Heart left ventricle (tissue), 16 donors: ENCODE measurements at regions of chr13 and their contacts with region 1.

Region 1: DNA sequence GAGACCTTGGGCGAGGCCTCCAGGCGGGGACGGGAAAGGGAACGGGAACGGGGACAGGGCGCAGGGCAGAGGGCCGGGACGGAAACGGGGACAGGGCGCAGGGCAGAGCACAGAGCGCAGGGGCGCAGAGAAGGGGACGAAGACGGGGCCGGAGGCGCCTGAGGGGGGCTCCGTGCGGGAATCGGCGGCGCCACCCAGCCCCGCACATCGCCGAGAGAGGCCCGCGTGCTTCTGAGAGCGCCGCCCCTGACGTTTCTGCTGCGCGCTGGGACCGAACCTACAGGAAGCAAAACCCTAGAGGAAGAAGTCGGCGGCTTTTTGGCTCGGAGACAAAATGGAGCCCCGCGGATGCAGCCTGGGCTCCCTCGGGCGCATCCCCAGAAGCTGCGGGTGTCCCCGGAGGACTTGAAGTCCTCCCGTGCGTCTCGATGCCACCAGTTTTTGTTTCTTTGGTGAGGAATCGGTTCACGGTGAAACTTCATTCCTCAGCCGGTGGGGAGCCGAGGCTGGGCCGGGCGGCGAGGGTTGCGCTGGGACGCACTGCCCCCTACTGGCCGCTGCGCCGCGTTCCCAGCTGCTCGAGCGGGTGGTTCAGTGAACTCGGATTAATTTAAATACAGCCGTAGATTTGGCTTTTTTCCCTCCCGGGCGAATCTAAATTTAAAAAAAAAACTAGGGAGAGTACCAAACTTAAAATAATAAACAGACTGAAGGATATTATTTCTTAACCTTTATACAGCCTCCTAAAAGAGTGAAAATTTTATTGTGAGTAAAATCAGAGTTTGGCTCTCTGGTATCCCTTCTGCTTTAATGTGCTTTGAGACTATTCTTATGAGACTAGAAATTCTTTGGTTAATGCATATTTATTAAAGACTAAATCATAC is 350.0 kb upstream of the ARGLU1 start:
- DNase-seq: peak; percentile 67 to 88 (median 82)
- ATAC-seq: peak; percentile 85 to 92 (median 88)
- H3K4me3 ChIP-seq: peak overlapping the region; percentile 40 to 73 (median 62)
- H3K27ac ChIP-seq: peak overlapping the region; percentile 86 to 98 (median 94)
- H3K4me1 ChIP-seq: peaks cover 0 to 27% (median 8%) of the 10 kb centered on the region in 12 donors
- H3K27me3 ChIP-seq: peaks cover 0 to 3% (median 0%) of the 10 kb centered on the region in 9 donors
- CTCF ChIP-seq: peak; percentile 88 to 98 (median 93)
- POLR2A ChIP-seq: no peak

Region 2: GRCh38 chr13:106567474-106568298 is 350.2 kb before region 1 on chr13 and contains the start of gene ARGLU1:
- intact Hi-C with region 1: loop called in 1 of 10 experiments (anchors 10 kb)
- DNase-seq: peak; percentile 94 to 97 (median 95)
- ATAC-seq: peak; percentile 93 to 97 (median 94)
- H3K4me3 ChIP-seq: peak within 1 kb of the TSS; percentile 72 to 98 (median 95)
- H3K27ac ChIP-seq: peak within 1 kb of the TSS; percentile 96 to 100 (median 98)
- H3K4me1 ChIP-seq: peaks cover 0 to 55% (median 40%) of the 10 kb centered on the region in 12 donors
- H3K27me3 ChIP-seq: no peaks in the 10 kb centered on the region
- CTCF ChIP-seq: no peak
- POLR2A ChIP-seq: peak; percentile 47 to 94
- total RNA-seq, gene ARGLU1: 14.2 to 35.6 (median 28.1) TPM

Region 3: DNA sequence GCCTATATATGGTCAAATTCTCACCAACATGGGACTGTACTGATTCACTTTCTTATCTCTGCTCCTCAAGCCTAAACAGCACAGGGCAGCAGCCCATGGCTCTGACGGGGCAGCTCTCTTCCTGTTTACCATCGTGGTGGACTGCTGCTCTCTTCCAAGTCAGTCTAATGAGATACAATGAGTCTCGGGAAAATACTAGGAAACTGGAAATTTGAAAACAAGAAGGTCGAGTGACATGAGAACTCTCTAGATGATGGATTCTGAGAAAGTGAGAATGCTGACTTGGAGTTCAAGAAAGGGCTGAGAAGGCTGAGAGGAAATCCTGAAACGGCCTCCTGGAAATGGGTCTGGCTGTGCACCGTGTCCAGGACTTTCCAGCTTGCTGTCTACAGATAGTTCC is 227.1 kb before region 1 on chr13:
- intact Hi-C with region 1: loop called in 4 of 10 experiments (anchors 5 to 10 kb)
- DNase-seq: no peak
- ATAC-seq: peak in 3 of 4 donors; percentile 42 to 73 (median 57)
- H3K4me3 ChIP-seq: no peak overlapping the region
- H3K27ac ChIP-seq: peak overlapping the region in 11 of 12 donors; percentile 17 to 76 (median 31)
- H3K4me1 ChIP-seq: peaks cover 0 to 25% (median 0%) of the 10 kb centered on the region in 12 donors
- H3K27me3 ChIP-seq: no peaks in the 10 kb centered on the region
- CTCF ChIP-seq: no peak
- POLR2A ChIP-seq: no peak

Region 4: DNA sequence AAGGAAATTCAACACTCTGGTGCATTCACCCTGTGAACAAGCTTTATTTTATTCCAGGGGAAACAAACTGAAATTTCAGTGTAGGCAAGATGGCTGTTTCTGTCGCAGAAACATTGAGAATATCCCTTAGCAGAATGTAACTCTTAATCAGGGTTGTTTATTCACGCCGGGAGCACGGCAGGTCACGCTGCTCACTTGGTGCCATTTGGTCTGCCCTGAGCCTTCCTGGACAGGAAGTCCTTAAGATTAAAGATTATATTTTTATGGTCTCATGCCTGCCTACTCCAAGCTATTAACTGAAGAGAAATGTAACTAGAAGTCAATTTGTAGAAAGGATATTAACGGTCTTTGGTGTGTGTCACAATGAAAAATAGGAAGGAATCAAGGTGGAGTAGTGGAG is 164.7 kb before region 1 on chr13:
- intact Hi-C with region 1: loop called in 3 of 10 experiments (anchors 5 to 10 kb)
- DNase-seq: peak in 2 of 5 donors; percentile 26 to 36
- ATAC-seq: peak in 3 of 4 donors; percentile 61 to 67 (median 65)
- H3K4me3 ChIP-seq: peak overlapping the region in 1 of 12 donors; percentile 5
- H3K27ac ChIP-seq: peak overlapping the region in 9 of 12 donors; percentile 11 to 68 (median 38)
- H3K4me1 ChIP-seq: peaks cover 0 to 39% (median 10%) of the 10 kb centered on the region in 12 donors
- H3K27me3 ChIP-seq: no peaks in the 10 kb centered on the region
- CTCF ChIP-seq: no peak
- POLR2A ChIP-seq: no peak

Region 5: GRCh38 chr13:107025978-107026377 is 108.1 kb after region 1 on chr13:
- intact Hi-C with region 1: loop called in 1 of 10 experiments (anchors 10 kb)
- DNase-seq: peak; percentile 33 to 65 (median 49)
- ATAC-seq: peak; percentile 78 to 96 (median 90)
- H3K4me3 ChIP-seq: no peak overlapping the region
- H3K27ac ChIP-seq: peak overlapping the region in 4 of 12 donors; percentile 18 to 63 (median 34)
- H3K4me1 ChIP-seq: peaks cover 0 to 10% (median 0%) of the 10 kb centered on the region in 12 donors
- H3K27me3 ChIP-seq: no peaks in the 10 kb centered on the region
- CTCF ChIP-seq: no peak
- POLR2A ChIP-seq: no peak

Region 6: GRCh38 chr13:107205303-107206104 is 287.6 kb after region 1 on chr13:
- intact Hi-C with region 1: loop called in 2 of 10 experiments (anchors 2 to 5 kb)
- DNase-seq: peak; percentile 48 to 74 (median 63)
- ATAC-seq: peak; percentile 46 to 74 (median 66)
- H3K4me3 ChIP-seq: peak overlapping the region in 1 of 12 donors; percentile 13
- H3K27ac ChIP-seq: peak overlapping the region in 6 of 12 donors; percentile 1 to 89 (median 34)
- H3K4me1 ChIP-seq: peaks cover 8 to 52% (median 22%) of the 10 kb centered on the region in 12 donors
- H3K27me3 ChIP-seq: no peaks in the 10 kb centered on the region
- CTCF ChIP-seq: peak; percentile 96 to 100 (median 98)
- POLR2A ChIP-seq: no peak